Posterior vena cava (tissue), 2 donors: ENCODE measurements at regions of chr15 and their contacts with region 1.

Region 1: GRCh38 chr15:68285259-68285980 is 7.9 kb downstream of the FEM1B start:
- DNase-seq: no peak

Region 2: GRCh38 chr15:68252925-68253534 is 32.4 kb before region 1 on chr15:
- intact Hi-C with region 1: loop called in 1 of 2 experiments (anchors 5 kb)
- DNase-seq: no peak